Tibial artery (tissue), 4 donors: ENCODE measurements at regions of chr2 and their contacts with region 1.

Region 1: GRCh38 chr2:112726497-112727190 is 5.8 kb downstream of the NT5DC4 start:
- DNase-seq: peak; percentile 90 to 91
- H3K4me3 ChIP-seq: no peak overlapping the region
- H3K27ac ChIP-seq: no peak overlapping the region
- H3K4me1 ChIP-seq: peaks cover 0 to 5% (median 0%) of the 10 kb centered on the region in 4 donors
- H3K27me3 ChIP-seq: peaks cover 0 to 13% of the 10 kb centered on the region in 2 donors
- CTCF ChIP-seq: peak; percentile 91 to 93

Region 2: GRCh38 chr2:112601751-112602150 is 124.9 kb before region 1 on chr2:
- intact Hi-C with region 1: loop called (anchors 5 kb)
- DNase-seq: no peak
- H3K4me3 ChIP-seq: no peak overlapping the region
- H3K27ac ChIP-seq: no peak overlapping the region
- H3K4me1 ChIP-seq: peaks cover 0 to 12% (median 1%) of the 10 kb centered on the region in 4 donors
- H3K27me3 ChIP-seq: no peaks in the 10 kb centered on the region
- CTCF ChIP-seq: no peak

Region 3: GRCh38 chr2:112626604-112627059 is 100.0 kb before region 1 on chr2:
- intact Hi-C with region 1: loop called (anchors 2 kb)
- DNase-seq: peak; percentile 41 to 73
- H3K4me3 ChIP-seq: peak overlapping the region in 1 of 2 donors; percentile 29
- H3K27ac ChIP-seq: peak overlapping the region; percentile 66 to 68
- H3K4me1 ChIP-seq: peaks cover 0 to 28% (median 21%) of the 10 kb centered on the region in 4 donors
- H3K27me3 ChIP-seq: no peaks in the 10 kb centered on the region
- CTCF ChIP-seq: peak; percentile 71 to 83

Region 4: GRCh38 chr2:112674229-112674628 is 52.4 kb before region 1 on chr2:
- intact Hi-C with region 1: no loop called
- DNase-seq: peak; percentile 82 to 83
- H3K4me3 ChIP-seq: no peak overlapping the region
- H3K27ac ChIP-seq: no peak overlapping the region
- H3K4me1 ChIP-seq: no peaks in the 10 kb centered on the region
- H3K27me3 ChIP-seq: no peaks in the 10 kb centered on the region
- CTCF ChIP-seq: no peak